ENCODE measurements at regions of chr1 and their contacts with region 1.

Region 1: DNA sequence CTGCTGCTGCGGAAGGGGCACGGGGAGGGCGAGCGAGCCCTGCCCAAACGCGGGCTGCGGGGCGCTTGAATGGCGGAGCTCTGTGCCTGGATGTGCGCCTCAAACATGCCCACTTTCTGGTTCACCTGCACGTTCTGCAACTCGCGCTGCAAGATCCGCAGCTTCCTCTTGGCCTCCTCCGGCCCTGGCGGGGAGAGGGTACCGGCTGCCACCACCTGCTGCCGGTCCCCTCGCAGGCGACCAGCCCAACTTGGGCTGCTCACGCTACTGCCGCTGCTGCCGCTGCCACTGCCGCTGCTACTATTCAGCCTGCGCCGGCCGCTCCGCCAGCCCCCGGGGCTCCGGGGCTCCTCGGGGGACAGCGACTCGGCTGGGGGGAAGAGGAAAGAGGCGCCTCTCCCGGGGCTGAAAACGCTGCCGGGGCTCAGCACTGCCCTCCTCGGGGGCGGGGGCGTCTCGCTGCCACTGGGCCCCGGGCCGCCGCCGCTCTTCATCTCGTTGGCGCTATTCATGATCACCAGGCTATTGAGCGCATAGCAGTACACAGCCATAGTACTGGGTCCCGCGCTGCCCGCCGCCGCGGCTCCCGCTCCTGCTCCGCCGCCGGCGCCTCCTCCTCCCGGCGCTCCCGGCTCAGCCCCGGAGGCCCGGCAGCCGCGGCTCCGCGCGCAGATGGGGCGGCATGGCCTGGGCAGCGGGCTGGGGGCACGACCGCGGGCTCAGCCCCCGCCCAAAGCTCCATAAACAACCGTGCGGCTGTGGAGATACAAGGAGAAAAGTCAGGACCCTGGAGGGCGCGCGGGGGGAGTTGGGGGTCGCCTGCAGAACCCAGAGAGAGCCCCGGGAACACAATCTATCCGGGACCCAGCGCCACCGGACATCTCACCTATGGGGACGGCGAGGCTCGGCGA is 1.9 kb downstream of the ITPKB start:
- DNase-seq: peak in 7 of 9 donors; percentile 45 to 66 (median 59)
- ATAC-seq: peak; percentile 51
- H3K4me3 ChIP-seq: peak overlapping the region; percentile 99
- H3K4me3 Mint-ChIP-seq: peak overlapping the region; percentile 89 to 99 (median 93)
- H3K27ac ChIP-seq: peak overlapping the region; percentile 92
- H3K27ac Mint-ChIP-seq: peak overlapping the region; percentile 81 to 99 (median 97)
- H3K4me1 ChIP-seq: peaks cover 22 to 38% of the 10 kb centered on the region in 2 donors
- H3K4me1 Mint-ChIP-seq: peaks cover 14 to 54% (median 35%) of the 10 kb centered on the region in 7 donors
- H3K27me3 ChIP-seq: no peaks in the 10 kb centered on the region
- H3K27me3 Mint-ChIP-seq: no peaks in the 10 kb centered on the region

Region 2: DNA sequence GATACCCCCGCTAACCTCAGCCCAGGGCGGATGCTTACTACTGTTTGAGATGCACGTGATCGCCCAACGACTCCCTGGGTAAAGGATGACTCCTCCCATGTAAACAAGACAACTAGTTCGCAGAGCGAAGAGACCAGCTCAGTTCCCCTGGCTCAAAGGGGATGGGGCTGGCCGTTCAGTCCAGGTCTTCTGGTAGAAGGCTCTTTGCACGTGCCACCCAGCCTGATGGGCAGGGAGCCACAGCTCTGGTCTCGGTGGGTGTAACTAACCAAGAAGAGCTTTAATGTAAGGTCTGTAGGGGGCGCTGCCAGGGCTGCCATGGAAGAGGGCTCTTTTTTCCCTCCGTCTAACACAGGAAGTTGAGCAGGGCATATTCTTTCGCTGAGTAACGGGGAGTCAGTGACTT is 279.9 kb before region 1 on chr1:
- CTCF ChIA-PET with region 1: no interaction called
- POLR2A ChIA-PET with region 1: no interaction called
- intact Hi-C with region 1: no loop called
- DNase-seq: peak; percentile 13 to 76 (median 52)
- ATAC-seq: peak; percentile 90
- H3K4me3 ChIP-seq: peak overlapping the region; percentile 54
- H3K4me3 Mint-ChIP-seq: peak overlapping the region; percentile 47 to 88 (median 78)
- H3K27ac ChIP-seq: peak overlapping the region; percentile 4
- H3K27ac Mint-ChIP-seq: peak overlapping the region; percentile 17 to 88 (median 65)
- H3K4me1 ChIP-seq: peaks cover 7 to 16% of the 10 kb centered on the region in 2 donors
- H3K4me1 Mint-ChIP-seq: peaks cover 8 to 16% (median 14%) of the 10 kb centered on the region in 7 donors
- H3K27me3 ChIP-seq: no peaks in the 10 kb centered on the region
- H3K27me3 Mint-ChIP-seq: peaks cover 0 to 4% (median 0%) of the 10 kb centered on the region in 5 donors

Region 3: DNA sequence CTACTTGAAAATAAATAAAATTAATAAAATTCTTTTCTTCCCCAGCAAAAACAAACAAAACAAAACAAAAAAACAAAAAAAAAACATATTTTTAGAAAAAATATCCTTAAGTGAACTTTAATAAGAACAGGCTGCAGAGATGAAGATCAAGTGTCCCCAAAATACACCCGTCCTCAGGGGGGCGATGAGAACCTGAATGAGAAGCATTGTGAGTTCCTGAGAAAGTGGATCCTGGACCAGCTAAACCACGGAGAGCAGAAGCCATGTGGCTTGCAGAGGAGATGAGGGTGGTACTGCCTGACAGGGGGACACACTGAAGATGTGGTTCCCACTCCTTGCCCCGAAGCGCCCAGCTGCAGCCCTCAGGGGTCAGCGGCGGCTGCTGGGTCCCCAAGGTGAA is 87.4 kb before region 1 on chr1:
- CTCF ChIA-PET with region 1: interaction called, 3 read pairs
- POLR2A ChIA-PET with region 1: interaction called, 24 read pairs
- intact Hi-C with region 1: loop called in 1 of 2 experiments (anchors 1 kb)
- DNase-seq: peak in 6 of 9 donors; percentile 48 to 58 (median 54)
- ATAC-seq: no peak
- H3K4me3 ChIP-seq: no peak overlapping the region
- H3K4me3 Mint-ChIP-seq: peak overlapping the region in 5 of 10 donors; percentile 15 to 50 (median 17)
- H3K27ac ChIP-seq: no peak overlapping the region
- H3K27ac Mint-ChIP-seq: no peak overlapping the region
- H3K4me1 ChIP-seq: peaks cover 23 to 51% of the 10 kb centered on the region in 2 donors
- H3K4me1 Mint-ChIP-seq: peaks cover 0 to 83% (median 63%) of the 10 kb centered on the region in 7 donors
- H3K27me3 ChIP-seq: no peaks in the 10 kb centered on the region
- H3K27me3 Mint-ChIP-seq: no peaks in the 10 kb centered on the region

Region 4: GRCh38 chr1:226687426-226687825 is 49.7 kb before region 1 on chr1:
- CTCF ChIA-PET with region 1: interaction called, 5 read pairs
- POLR2A ChIA-PET with region 1: interaction called, 14 read pairs
- intact Hi-C with region 1: no loop called
- DNase-seq: peak in 7 of 9 donors; percentile 22 to 69 (median 55)
- ATAC-seq: peak; percentile 55
- H3K4me3 ChIP-seq: no peak overlapping the region
- H3K4me3 Mint-ChIP-seq: peak overlapping the region; percentile 4 to 89 (median 66)
- H3K27ac ChIP-seq: peak overlapping the region; percentile 86
- H3K27ac Mint-ChIP-seq: peak overlapping the region; percentile 20 to 100 (median 99)
- H3K4me1 ChIP-seq: peaks cover 80 to 100% of the 10 kb centered on the region in 2 donors
- H3K4me1 Mint-ChIP-seq: peaks cover 86 to 100% (median 100%) of the 10 kb centered on the region in 7 donors
- H3K27me3 ChIP-seq: no peaks in the 10 kb centered on the region
- H3K27me3 Mint-ChIP-seq: no peaks in the 10 kb centered on the region

Region 5: GRCh38 chr1:226711976-226712741 is 25.0 kb before region 1 on chr1:
- CTCF ChIA-PET with region 1: interaction called, 10 read pairs
- POLR2A ChIA-PET with region 1: no interaction called
- intact Hi-C with region 1: loop called in 1 of 2 experiments (anchors 1 kb)
- DNase-seq: peak in 7 of 9 donors; percentile 52 to 76 (median 61)
- ATAC-seq: peak; percentile 69
- H3K4me3 ChIP-seq: peak overlapping the region; percentile 43
- H3K4me3 Mint-ChIP-seq: peak overlapping the region; percentile 68 to 92 (median 82)
- H3K27ac ChIP-seq: peak overlapping the region; percentile 75
- H3K27ac Mint-ChIP-seq: peak overlapping the region; percentile 79 to 100 (median 95)
- H3K4me1 ChIP-seq: peaks cover 69 to 88% of the 10 kb centered on the region in 2 donors
- H3K4me1 Mint-ChIP-seq: peaks cover 72 to 100% (median 99%) of the 10 kb centered on the region in 7 donors
- H3K27me3 ChIP-seq: no peaks in the 10 kb centered on the region
- H3K27me3 Mint-ChIP-seq: no peaks in the 10 kb centered on the region

Region 6: DNA sequence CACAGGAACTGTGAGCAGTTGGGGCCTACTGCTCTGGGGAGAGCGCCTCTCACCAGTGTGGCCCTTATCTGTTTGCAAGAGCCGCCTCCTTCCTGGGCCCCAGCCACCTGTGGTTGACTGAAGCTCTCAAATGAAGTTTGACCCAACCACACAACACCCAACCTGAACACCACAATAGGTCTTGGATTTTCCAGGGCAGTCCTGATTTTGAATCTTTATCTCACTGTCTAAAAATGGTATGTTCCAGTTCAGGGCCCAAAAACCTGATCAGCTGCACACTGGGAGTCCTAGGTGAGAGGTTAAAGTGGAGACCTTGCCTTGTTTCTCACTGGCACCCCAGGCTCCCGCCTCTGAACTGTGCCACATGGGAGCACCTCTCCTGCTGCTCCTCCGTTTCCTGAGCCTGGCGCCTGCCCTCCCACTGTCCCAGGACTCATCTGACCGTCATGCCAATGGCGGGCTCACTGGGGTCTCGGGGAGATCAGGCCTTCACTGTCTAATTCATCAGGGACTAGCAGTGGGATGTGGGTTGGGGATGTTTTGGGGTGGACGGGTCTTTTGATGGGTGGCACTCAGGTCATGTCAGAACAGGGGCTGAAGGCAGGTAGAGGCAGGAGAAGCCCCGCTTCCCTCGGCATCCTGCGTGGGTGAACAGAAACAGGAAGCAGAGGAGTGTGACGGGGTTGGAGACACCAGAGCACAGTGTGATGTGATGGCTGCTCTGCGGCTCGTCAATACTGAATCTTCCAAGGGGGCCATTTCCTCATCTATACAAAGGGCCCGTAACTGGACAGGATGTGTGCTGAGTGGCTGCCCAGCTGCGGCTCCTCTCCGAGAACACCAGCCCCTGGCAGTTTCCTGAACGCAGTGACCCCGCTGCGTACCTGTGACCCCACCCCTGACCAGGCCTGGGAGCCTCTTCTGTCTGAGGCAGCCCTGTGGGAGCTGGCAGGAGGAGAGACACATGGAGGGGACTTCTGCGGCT is 61.6 kb after region 1 on chr1:
- CTCF ChIA-PET with region 1: no interaction called
- POLR2A ChIA-PET with region 1: interaction called, 24 read pairs
- intact Hi-C with region 1: loop called (anchors 1 kb)
- DNase-seq: peak; percentile 24 to 75 (median 67)
- ATAC-seq: peak; percentile 85
- H3K4me3 ChIP-seq: peak overlapping the region; percentile 33
- H3K4me3 Mint-ChIP-seq: peak overlapping the region; percentile 66 to 86 (median 72)
- H3K27ac ChIP-seq: peak overlapping the region; percentile 67
- H3K27ac Mint-ChIP-seq: peak overlapping the region; percentile 96 to 100 (median 99)
- H3K4me1 ChIP-seq: peaks cover 31 to 33% of the 10 kb centered on the region in 2 donors
- H3K4me1 Mint-ChIP-seq: peaks cover 27 to 47% (median 40%) of the 10 kb centered on the region in 7 donors
- H3K27me3 ChIP-seq: no peaks in the 10 kb centered on the region
- H3K27me3 Mint-ChIP-seq: peaks cover 0 to 12% (median 0%) of the 10 kb centered on the region in 5 donors

Region 7: DNA sequence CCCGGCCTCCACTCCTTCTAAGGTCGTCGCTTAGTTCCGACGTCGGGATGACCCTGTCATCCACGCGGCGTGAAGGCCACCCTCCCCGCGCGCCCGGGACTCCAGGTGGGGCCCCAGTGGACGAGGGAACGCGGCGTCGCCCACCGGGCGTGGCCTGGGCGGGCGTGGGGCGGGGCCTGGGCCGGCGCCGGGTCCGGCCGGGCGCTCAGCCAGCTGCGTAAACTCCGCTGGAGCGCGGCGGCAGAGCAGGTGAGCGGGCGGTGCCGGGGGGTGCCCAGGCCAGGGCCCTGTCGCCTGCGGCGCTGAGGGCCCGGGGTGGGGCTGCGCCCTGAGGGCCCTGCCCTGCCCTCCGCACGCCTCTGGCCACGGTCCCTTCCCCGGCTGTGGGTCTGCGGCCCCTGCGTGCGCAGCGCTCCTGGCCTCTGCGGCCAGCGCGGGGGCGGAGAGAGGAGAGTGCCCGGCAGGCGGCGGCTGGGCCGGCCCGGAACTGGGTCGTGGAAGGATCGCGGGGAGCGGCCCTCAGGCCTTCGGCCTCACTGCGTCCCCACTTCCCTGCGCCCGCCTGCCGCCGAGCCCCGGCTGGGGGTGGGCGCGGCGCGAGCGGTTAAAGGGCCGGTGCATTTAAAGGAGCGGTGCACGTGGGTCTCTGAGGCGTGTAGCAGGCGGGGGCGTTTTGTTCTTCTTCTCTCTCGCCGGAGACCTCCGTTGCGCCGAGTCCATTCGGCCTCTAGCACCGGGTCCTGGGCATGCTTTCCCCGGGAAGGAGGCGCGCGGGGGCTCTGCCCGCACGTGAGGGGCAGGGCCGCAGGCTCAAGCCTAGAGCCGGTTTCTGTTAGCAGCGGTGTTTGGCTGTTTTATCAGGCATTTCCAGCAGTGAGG is 133.5 kb after region 1 on chr1 and contains the start of gene PSEN2:
- CTCF ChIA-PET with region 1: no interaction called
- POLR2A ChIA-PET with region 1: no interaction called
- intact Hi-C with region 1: no loop called
- DNase-seq: peak in 6 of 9 donors; percentile 17 to 77 (median 34)
- ATAC-seq: peak; percentile 87
- H3K4me3 ChIP-seq: peak within 1 kb of the TSS; percentile 57
- H3K4me3 Mint-ChIP-seq: peak within 1 kb of the TSS; percentile 73 to 88 (median 84)
- H3K27ac ChIP-seq: no peak within 1 kb of the TSS
- H3K27ac Mint-ChIP-seq: peak within 1 kb of the TSS in 2 of 9 donors; percentile 10 to 48
- H3K4me1 ChIP-seq: peaks cover 0 to 3% of the 10 kb centered on the region in 2 donors
- H3K4me1 Mint-ChIP-seq: peaks cover 3 to 21% (median 11%) of the 10 kb centered on the region in 7 donors
- H3K27me3 ChIP-seq: no peaks in the 10 kb centered on the region
- H3K27me3 Mint-ChIP-seq: peaks cover 7 to 27% (median 10%) of the 10 kb centered on the region in 5 donors
- total RNA-seq, gene PSEN2: 0.70 to 10.3 (median 3.7) TPM

Region 8: DNA sequence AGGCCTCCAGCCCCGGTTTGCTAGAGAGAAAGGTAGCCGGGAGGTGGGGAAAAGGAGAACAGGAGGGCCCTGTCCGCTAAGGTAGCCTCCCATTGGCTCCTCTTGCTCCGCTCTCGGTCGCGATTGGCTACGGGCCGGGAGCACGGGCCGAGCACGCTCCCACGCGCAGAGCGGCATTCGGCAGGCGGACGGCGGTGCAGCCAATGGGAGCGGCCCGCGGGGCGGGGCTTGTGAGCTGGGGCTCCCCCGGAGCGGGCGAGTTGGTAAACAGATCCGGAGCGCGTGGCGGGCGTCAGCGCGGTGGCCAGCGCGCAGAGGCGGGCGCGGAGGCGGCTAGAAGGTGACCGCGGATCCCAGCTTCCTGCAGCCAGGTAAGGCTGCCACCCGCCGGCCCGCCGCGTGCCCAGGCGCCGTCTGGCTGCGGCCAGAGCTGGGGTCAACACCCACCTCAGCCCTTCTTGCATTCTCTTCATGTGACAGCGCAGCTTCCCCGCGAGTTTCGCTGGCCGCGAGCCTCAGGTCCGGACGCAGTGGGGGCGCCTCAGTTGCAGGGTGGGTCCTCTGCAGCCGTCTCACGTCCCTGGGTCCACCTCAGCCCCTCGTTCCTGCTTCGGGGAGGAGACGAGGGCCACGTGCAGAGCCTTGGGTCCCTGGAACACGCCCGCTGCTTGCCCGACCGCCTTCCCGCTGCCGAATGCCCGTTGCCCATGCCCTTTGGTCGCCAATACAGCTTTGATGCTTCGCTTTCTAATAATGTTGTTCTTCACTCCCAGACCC is 203.1 kb after region 1 on chr1 and contains the start of gene COQ8A:
- CTCF ChIA-PET with region 1: no interaction called
- POLR2A ChIA-PET with region 1: interaction called, 10 read pairs
- intact Hi-C with region 1: loop called (anchors 1 to 2 kb)
- DNase-seq: peak in 8 of 9 donors; percentile 99 to 100 (median 100)
- ATAC-seq: peak; percentile 95
- H3K4me3 ChIP-seq: peak within 1 kb of the TSS; percentile 84
- H3K4me3 Mint-ChIP-seq: peak within 1 kb of the TSS; percentile 85 to 94 (median 92)
- H3K27ac ChIP-seq: peak within 1 kb of the TSS; percentile 87
- H3K27ac Mint-ChIP-seq: peak within 1 kb of the TSS; percentile 94 to 98 (median 97)
- H3K4me1 ChIP-seq: peaks cover 15 to 34% of the 10 kb centered on the region in 2 donors
- H3K4me1 Mint-ChIP-seq: peaks cover 43 to 67% (median 50%) of the 10 kb centered on the region in 7 donors
- H3K27me3 ChIP-seq: no peaks in the 10 kb centered on the region
- H3K27me3 Mint-ChIP-seq: no peaks in the 10 kb centered on the region
- total RNA-seq, gene COQ8A: 34.1 to 83.4 (median 67.8) TPM